ENCODE measurements at regions of chr17 and their contacts with region 1.

Region 1: GRCh38 chr17:19867064-19867313 is 747 bp downstream of the ULK2 start:
- DNase-seq: peak; percentile 72
- ATAC-seq: peak; percentile 67
- H3K4me3 Mint-ChIP-seq: peak overlapping the region; percentile 80
- H3K27ac Mint-ChIP-seq: peak overlapping the region; percentile 65
- H3K4me1 Mint-ChIP-seq: peaks cover 21% of the 10 kb centered on the region
- H3K27me3 Mint-ChIP-seq: no peaks in the 10 kb centered on the region

Region 2: GRCh38 chr17:19648475-19649406 is 218.2 kb before region 1 on chr17 and contains the start of gene ALDH3A2:
- CTCF ChIA-PET with region 1: no interaction called
- POLR2A ChIA-PET with region 1: no interaction called
- intact Hi-C with region 1: loop called in 1 of 2 experiments (anchors 2 kb)
- DNase-seq: peak; percentile 97
- ATAC-seq: peak; percentile 94
- H3K4me3 Mint-ChIP-seq: peak within 1 kb of the TSS; percentile 79
- H3K27ac Mint-ChIP-seq: peak within 1 kb of the TSS; percentile 87
- H3K4me1 Mint-ChIP-seq: peaks cover 38% of the 10 kb centered on the region
- H3K27me3 Mint-ChIP-seq: peaks cover 1% of the 10 kb centered on the region
- total RNA-seq, gene ALDH3A2: 18.5 to 23.9 TPM

Region 3: DNA sequence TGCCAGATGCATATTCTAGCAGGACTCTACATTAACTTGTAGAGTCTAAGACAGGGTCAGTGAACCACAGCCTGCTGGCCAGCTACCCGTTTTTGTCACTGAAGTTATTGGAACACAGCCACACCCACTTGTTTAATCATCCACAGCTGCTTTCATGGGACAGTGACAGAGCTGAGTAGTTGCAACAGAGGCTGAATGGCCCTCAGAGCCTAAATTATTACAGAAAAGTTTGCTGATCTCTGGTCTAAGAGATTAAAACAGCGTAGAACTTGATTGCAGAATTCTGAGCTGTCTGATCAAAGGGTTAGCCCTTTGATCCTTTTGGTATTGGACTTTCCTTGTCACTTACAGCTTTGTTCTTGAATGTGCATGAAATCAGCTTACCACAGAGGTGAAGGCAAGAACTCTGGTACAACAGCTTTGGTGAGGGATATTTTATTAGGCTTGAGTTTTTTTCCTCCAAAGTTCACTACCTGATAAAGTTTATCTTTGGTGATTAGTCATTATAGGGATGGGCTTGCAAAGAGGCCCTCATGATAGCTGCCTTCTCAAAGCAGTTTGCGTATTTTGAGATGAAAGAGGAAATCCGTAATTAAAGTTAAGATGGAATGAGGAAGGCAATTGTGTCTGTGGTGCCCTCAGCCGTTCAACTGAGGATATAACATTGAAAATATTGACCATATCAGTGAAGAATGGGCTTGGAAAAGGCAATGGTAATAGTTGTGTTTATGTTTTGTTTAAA is 194.8 kb before region 1 on chr17:
- CTCF ChIA-PET with region 1: no interaction called
- POLR2A ChIA-PET with region 1: no interaction called
- intact Hi-C with region 1: no loop called
- DNase-seq: no peak
- ATAC-seq: no peak
- H3K4me3 Mint-ChIP-seq: no peak overlapping the region
- H3K27ac Mint-ChIP-seq: no peak overlapping the region
- H3K4me1 Mint-ChIP-seq: no peaks in the 10 kb centered on the region
- H3K27me3 Mint-ChIP-seq: no peaks in the 10 kb centered on the region